Activated CD8-positive, alpha-beta T cell treated with anti-CD3 and anti-CD28 coated beads for 36 hours (primary cell): ENCODE measurements at regions of chr1 and their contacts with region 1.

Region 1: DNA sequence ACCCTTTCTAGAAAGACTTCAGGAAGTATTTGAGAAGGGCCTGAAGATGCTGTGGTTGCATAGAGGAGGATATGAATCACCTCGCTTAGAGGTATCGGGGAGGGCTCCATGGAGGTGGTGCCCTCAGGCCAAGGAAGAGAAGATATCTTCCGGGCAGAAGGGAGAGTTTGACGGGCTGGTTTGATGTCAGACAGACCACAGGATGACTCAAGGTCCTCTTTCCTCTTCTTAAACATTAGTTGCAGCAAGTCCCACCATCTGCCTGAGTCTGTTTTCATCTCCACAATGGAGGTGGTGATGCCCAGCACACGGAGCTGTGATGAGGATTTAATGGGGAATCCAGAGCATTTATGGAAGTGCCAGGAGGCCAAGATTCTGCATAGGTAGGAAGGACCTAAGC is 25.1 kb upstream of the RUNX3 start:
- DNase-seq: peak; percentile 92
- ATAC-seq: peak; percentile 84
- H3K4me3 Mint-ChIP-seq: peak overlapping the region; percentile 99
- H3K27ac Mint-ChIP-seq: peak overlapping the region; percentile 97
- H3K4me1 Mint-ChIP-seq: peaks cover 89% of the 10 kb centered on the region
- H3K27me3 Mint-ChIP-seq: no peaks in the 10 kb centered on the region
- CTCF ChIP-seq: no peak

Region 2: DNA sequence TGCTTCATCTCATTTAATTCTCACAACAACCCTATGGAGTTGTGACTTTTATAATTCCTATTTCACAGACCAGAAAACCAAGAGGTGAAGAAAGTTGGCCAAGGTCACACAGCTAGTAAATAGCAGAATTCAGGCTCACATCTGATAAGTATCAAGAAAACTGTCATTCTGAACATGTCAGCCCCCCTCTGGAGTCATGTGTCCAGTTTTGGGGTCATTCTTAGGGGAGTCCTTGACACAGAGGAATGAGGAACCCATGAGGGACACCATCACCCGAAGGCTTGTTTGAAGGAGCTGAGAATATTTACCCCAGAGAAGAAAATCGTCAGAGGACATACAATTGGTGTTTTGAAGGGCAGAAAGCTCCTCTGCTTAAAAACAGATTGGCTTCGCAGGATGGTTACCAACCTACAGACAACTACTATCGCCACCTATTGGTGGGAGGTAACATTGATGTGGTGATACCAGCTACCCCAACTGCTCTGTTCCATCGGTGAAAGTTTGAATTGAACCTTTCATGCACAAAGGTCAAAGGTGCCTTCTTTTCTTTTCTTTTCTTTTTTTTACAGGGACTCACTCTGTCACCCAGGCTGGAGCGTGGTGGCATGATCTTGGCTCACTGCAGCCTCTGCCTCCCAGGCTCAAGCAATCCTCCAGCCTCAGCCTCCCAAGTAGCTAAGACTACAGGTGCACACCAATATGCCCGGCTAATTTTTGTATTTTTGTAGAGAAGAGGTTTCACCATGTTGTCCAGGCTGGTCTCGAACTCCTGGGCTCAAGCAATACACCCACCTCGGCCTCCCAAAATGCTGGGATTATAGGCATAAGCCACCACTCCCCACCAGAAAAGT is 368.0 kb before region 1 on chr1:
- CTCF ChIA-PET with region 1: no interaction called
- POLR2A ChIA-PET with region 1: no interaction called
- intact Hi-C with region 1: no loop called
- DNase-seq: peak; percentile 70
- ATAC-seq: peak; percentile 98
- H3K4me3 Mint-ChIP-seq: no peak overlapping the region
- H3K27ac Mint-ChIP-seq: peak overlapping the region; percentile 78
- H3K4me1 Mint-ChIP-seq: peaks cover 8% of the 10 kb centered on the region
- H3K27me3 Mint-ChIP-seq: no peaks in the 10 kb centered on the region
- CTCF ChIP-seq: peak; percentile 71

Region 3: GRCh38 chr1:24923485-24924113 is 31.6 kb before region 1 on chr1:
- CTCF ChIA-PET with region 1: interaction called, 53 read pairs
- POLR2A ChIA-PET with region 1: interaction called, 113 read pairs
- intact Hi-C with region 1: no loop called
- DNase-seq: peak; percentile 54
- ATAC-seq: peak; percentile 9
- H3K4me3 Mint-ChIP-seq: peak overlapping the region; percentile 96
- H3K27ac Mint-ChIP-seq: peak overlapping the region; percentile 72
- H3K4me1 Mint-ChIP-seq: peaks cover 85% of the 10 kb centered on the region
- H3K27me3 Mint-ChIP-seq: no peaks in the 10 kb centered on the region
- CTCF ChIP-seq: no peak

Region 4: GRCh38 chr1:24930204-24931145 is 24.7 kb before region 1 on chr1 and contains the start of gene RUNX3:
- CTCF ChIA-PET with region 1: interaction called, 53 read pairs
- POLR2A ChIA-PET with region 1: interaction called, 113 read pairs
- intact Hi-C with region 1: no loop called
- DNase-seq: peak; percentile 92
- ATAC-seq: peak; percentile 81
- H3K4me3 Mint-ChIP-seq: peak within 1 kb of the TSS; percentile 96
- H3K27ac Mint-ChIP-seq: peak within 1 kb of the TSS; percentile 90
- H3K4me1 Mint-ChIP-seq: peaks cover 60% of the 10 kb centered on the region
- H3K27me3 Mint-ChIP-seq: no peaks in the 10 kb centered on the region
- CTCF ChIP-seq: no peak
- total RNA-seq, gene RUNX3: 180 to 183 TPM

Region 5: DNA sequence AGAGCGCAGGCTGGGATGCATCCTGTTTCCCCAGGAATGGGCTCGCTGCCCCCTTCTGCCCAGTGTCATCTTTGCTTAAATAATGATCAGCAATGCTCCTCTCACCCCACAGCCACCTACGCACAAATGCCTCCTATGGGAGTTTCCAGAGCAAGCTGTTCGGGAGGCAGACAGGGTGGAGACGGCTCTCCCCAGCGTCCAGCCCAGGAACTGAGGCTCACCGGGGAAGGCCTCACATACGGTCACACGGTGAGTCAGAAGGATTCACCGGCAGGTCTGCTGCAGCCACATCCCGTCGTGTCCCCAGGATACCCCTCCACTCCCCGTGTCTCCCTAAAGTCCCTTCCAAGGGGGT is 15.2 kb after region 1 on chr1:
- CTCF ChIA-PET with region 1: interaction called, 7 read pairs
- POLR2A ChIA-PET with region 1: interaction called, 117 read pairs
- intact Hi-C with region 1: no loop called
- DNase-seq: peak; percentile 48
- ATAC-seq: no peak
- H3K4me3 Mint-ChIP-seq: peak overlapping the region; percentile 77
- H3K27ac Mint-ChIP-seq: peak overlapping the region; percentile 89
- H3K4me1 Mint-ChIP-seq: peaks cover 85% of the 10 kb centered on the region
- H3K27me3 Mint-ChIP-seq: no peaks in the 10 kb centered on the region
- CTCF ChIP-seq: peak; percentile 26

Region 6: GRCh38 chr1:24987875-24988557 is 32.9 kb after region 1 on chr1:
- CTCF ChIA-PET with region 1: interaction called, 3 read pairs
- POLR2A ChIA-PET with region 1: interaction called, 157 read pairs
- intact Hi-C with region 1: loop called (anchors 5 kb)
- DNase-seq: peak; percentile 83
- ATAC-seq: peak; percentile 76
- H3K4me3 Mint-ChIP-seq: no peak overlapping the region
- H3K27ac Mint-ChIP-seq: peak overlapping the region; percentile 82
- H3K4me1 Mint-ChIP-seq: peaks cover 95% of the 10 kb centered on the region
- H3K27me3 Mint-ChIP-seq: no peaks in the 10 kb centered on the region
- CTCF ChIP-seq: no peak

Region 7: GRCh38 chr1:25031966-25032667 is 77.0 kb after region 1 on chr1:
- CTCF ChIA-PET with region 1: interaction called, 169 read pairs
- POLR2A ChIA-PET with region 1: interaction called, 172 read pairs
- intact Hi-C with region 1: loop called (anchors 2 kb)
- DNase-seq: peak; percentile 83
- ATAC-seq: peak; percentile 39
- H3K4me3 Mint-ChIP-seq: no peak overlapping the region
- H3K27ac Mint-ChIP-seq: no peak overlapping the region
- H3K4me1 Mint-ChIP-seq: peaks cover 84% of the 10 kb centered on the region
- H3K27me3 Mint-ChIP-seq: no peaks in the 10 kb centered on the region
- CTCF ChIP-seq: no peak

Region 8: DNA sequence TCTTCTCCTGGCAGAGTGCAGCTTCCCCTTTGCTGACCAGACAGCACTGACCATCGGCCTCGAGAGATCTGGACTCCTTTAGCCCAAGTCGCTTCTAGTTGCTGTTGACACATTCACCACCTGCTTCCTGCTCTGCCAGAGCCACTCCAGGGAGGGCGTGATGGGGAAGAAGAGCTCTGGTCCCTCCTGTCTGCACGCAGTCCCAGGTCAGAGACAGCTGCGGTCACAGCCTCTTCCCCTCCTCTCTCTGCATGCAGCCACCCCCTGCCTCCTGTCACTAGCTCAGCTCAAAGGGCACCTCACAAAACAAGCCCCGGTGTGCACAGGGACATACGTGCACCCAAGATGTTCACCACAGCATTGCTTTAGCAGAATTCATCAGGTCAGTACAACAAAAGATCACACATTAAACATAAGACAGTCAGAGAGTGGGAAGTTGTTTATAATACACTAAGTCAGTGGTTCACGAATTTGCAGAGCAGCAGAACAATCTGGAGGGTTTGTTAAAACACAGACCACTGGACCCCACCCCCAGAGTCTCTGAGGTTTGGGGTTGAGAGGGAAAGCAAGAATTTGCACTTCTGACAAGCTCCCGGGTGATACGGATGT is 144.3 kb after region 1 on chr1:
- CTCF ChIA-PET with region 1: interaction called, 15 read pairs
- POLR2A ChIA-PET with region 1: interaction called, 11 read pairs
- intact Hi-C with region 1: no loop called
- DNase-seq: peak; percentile 87
- ATAC-seq: peak; percentile 74
- H3K4me3 Mint-ChIP-seq: peak overlapping the region; percentile 42
- H3K27ac Mint-ChIP-seq: peak overlapping the region; percentile 76
- H3K4me1 Mint-ChIP-seq: peaks cover 73% of the 10 kb centered on the region
- H3K27me3 Mint-ChIP-seq: no peaks in the 10 kb centered on the region
- CTCF ChIP-seq: no peak